PC-9 (cell line): ENCODE measurements at regions of chr10 and their contacts with region 1.

Region 1: GRCh38 chr10:70849582-70850016 is 33.9 kb downstream of the SGPL1 start:
- DNase-seq: peak; percentile 40 to 85
- H3K4me3 ChIP-seq: no peak overlapping the region
- H3K27ac ChIP-seq: peak overlapping the region; percentile 68
- H3K4me1 ChIP-seq: peaks cover 60% of the 10 kb centered on the region
- H3K27me3 ChIP-seq: no peaks in the 10 kb centered on the region
- CTCF ChIP-seq: no peak

Region 2: GRCh38 chr10:70648427-70648826 is 201.2 kb before region 1 on chr10:
- CTCF ChIA-PET with region 1: no interaction called
- POLR2A ChIA-PET with region 1: no interaction called
- intact Hi-C with region 1: no loop called
- DNase-seq: peak in 1 of 2 experiments; percentile 41
- H3K4me3 ChIP-seq: no peak overlapping the region
- H3K27ac ChIP-seq: peak overlapping the region; percentile 41; the same call in 1 of the 2 replicates
- H3K4me1 ChIP-seq: peaks cover 31% of the 10 kb centered on the region
- H3K27me3 ChIP-seq: no peaks in the 10 kb centered on the region
- CTCF ChIP-seq: no peak

Region 3: DNA sequence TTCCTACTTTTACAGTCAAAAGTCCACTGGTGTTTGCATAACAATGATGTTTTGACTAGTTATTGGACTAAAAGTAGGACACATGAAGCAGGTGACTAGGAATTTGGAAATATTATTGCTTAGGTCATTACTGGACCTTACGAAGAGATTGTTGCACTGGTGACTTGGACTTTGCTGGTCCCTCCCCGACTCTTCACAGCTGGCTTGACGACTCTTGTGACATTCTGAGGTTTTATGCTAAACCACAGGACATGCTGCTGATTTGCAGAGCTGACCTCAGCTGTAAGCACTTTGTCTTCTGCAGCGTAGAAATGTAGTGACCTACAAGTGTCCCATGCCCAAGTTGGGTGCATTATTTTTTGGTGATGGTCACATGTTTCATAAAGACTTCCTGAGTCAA is 16.8 kb after region 1 on chr10:
- CTCF ChIA-PET with region 1: interaction called, 3 read pairs
- POLR2A ChIA-PET with region 1: no interaction called
- intact Hi-C with region 1: loop called (anchors 1 kb)
- DNase-seq: peak; percentile 69 to 96
- H3K4me3 ChIP-seq: peak overlapping the region; percentile 39; the same call in 1 of the 2 replicates
- H3K27ac ChIP-seq: peak overlapping the region; percentile 88
- H3K4me1 ChIP-seq: peaks cover 48% of the 10 kb centered on the region
- H3K27me3 ChIP-seq: no peaks in the 10 kb centered on the region
- CTCF ChIP-seq: no peak

Region 4: GRCh38 chr10:70931168-70931815 is 81.7 kb after region 1 on chr10:
- CTCF ChIA-PET with region 1: no interaction called
- POLR2A ChIA-PET with region 1: no interaction called
- intact Hi-C with region 1: no loop called
- DNase-seq: peak; percentile 70 to 73
- H3K4me3 ChIP-seq: no peak overlapping the region
- H3K27ac ChIP-seq: no peak overlapping the region
- H3K4me1 ChIP-seq: peaks cover 14% of the 10 kb centered on the region
- H3K27me3 ChIP-seq: peaks cover 12% of the 10 kb centered on the region
- CTCF ChIP-seq: no peak

Region 5: DNA sequence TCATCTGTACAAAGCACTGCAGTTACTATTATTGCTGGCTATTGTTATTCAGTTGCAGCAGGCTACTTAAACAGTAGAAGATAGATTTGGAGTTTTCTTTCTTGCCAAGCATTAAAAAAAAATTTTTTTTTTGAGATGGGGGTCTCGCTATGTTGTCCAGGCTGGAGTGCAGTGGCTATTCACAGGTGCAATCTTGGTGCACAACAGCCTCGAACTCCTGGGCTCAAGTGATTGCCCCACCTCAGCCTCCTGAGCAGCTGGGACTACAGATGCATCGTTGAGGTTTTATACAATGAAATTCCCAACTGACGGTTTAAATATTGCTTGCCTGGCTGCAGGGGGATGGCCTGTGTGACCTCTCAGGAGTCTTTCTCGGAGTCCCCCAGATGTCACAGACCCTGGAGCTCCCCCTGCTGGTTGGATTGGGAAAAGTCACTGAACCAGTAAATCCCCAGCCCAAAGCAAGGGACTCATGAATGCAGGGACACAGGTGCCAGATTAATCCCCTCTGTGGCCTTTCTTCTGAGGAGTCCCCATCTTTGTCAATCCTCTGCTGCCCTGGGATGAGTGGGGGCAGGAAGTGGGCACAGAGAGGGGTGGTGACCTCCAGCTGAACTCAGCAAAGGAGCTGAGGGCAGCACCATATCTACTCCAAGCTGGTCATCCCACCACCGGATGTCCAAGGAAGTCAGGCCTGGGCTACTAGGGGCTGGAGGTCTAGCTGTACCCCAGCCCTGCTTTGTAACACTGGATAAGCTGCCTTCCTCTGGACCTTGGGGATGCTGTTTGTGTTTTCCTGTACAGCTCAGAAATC is 720.4 kb after region 1 on chr10:
- CTCF ChIA-PET with region 1: no interaction called
- POLR2A ChIA-PET with region 1: no interaction called
- intact Hi-C with region 1: no loop called
- DNase-seq: peak in 1 of 2 experiments; percentile 75
- H3K4me3 ChIP-seq: no peak overlapping the region
- H3K27ac ChIP-seq: no peak overlapping the region
- H3K4me1 ChIP-seq: no peaks in the 10 kb centered on the region
- H3K27me3 ChIP-seq: no peaks in the 10 kb centered on the region
- CTCF ChIP-seq: peak; percentile 97